Stomach (tissue), 19 donors: ENCODE measurements at regions of chr3 and their contacts with region 1.

Region 1: DNA sequence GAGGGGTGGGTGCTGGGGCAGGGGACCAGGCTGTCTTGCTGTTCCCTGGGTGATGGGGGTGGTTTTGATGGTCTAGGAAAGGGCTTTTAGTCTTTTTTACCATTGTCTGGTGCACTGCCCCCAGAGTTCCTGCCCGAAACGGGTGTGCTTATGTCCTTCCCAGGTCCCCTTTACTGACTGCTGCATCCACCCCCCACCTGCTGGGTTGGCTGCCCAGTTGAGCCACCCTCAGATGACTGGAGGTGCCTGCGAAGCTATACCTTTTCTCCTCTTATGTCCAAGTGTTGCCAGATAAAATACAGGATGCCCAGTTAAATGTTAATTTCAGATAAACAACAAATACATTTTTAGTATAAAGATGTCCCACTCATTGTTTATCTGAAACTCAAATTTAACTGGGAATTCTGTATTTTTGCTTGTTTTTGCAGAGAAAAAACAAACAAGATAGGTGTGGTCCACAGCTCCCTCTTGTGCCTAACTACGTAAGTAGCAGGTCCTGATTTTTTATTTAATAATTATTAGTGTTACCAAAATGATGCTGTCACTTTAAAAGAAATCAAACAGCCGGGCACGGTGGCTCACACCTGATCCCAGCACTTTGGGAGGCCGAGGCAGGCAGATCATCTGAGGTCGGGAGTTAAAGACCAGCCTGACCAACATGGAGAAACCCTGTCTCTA is 6.1 kb upstream of the RPP14 start:
- DNase-seq: peak in 1 of 2 donors; percentile 75
- H3K4me3 ChIP-seq: no peak overlapping the region
- H3K27ac ChIP-seq: no peak overlapping the region
- H3K4me1 ChIP-seq: peaks cover 0 to 8% (median 4%) of the 10 kb centered on the region in 4 donors
- H3K27me3 ChIP-seq: peaks cover 0 to 23% (median 0%) of the 10 kb centered on the region in 3 donors
- CTCF ChIP-seq: peak in 5 of 7 experiments; percentile 39 to 64 (median 55)
- EP300 ChIP-seq: no peak
- POLR2A ChIP-seq: no peak

Region 2: DNA sequence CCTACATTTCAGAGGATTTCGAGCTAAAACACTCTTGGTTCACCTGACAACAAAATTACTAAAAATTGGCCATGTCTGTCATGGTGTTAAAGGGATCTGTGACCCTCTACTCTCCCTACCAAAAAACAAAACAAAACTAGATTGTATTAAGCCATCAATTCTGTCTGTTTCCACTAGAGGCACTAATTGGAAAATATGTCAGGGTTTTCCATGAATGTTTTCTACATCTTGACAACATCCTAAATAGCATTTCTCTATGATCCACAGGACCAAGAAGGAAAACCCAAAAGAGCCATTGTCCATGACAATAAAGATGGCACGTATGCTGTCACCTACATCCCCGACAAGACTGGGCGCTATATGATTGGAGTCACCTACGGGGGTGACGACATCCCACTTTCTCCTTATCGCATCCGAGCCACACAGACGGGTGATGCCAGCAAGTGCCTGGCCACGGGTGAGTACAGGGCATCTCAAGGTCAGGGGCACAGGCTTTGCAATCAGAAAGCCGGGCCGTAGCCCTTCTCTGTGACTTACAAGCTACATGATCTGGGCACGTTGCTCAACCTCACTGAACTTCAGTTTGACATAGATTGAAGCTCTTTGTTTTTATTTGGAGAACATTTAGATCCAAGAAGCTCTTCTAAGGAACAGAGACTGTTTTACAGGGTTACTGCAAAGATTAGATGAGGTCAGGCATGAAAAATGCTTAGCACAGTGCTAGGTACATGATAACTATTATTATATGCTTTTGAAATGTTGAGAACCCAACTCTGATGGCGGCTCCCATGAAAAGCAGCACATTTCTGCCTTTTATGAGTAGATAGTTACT is 164.1 kb before region 1 on chr3:
- intact Hi-C with region 1: no loop called
- DNase-seq: no peak
- H3K4me3 ChIP-seq: no peak overlapping the region
- H3K27ac ChIP-seq: peak overlapping the region in 2 of 5 donors; percentile 21 to 24
- H3K4me1 ChIP-seq: peaks cover 0 to 5% (median 0%) of the 10 kb centered on the region in 4 donors
- H3K27me3 ChIP-seq: no peaks in the 10 kb centered on the region
- CTCF ChIP-seq: peak in 1 of 7 experiments; percentile 10
- EP300 ChIP-seq: no peak
- POLR2A ChIP-seq: no peak

Region 3: GRCh38 chr3:58177747-58178527 is 122.0 kb before region 1 on chr3:
- intact Hi-C with region 1: loop called (anchors 5 kb)
- DNase-seq: peak; percentile 93 to 96
- H3K4me3 ChIP-seq: peak overlapping the region; percentile 40 to 51 (median 44)
- H3K27ac ChIP-seq: peak overlapping the region; percentile 20 to 88 (median 78)
- H3K4me1 ChIP-seq: peaks cover 52 to 74% (median 58%) of the 10 kb centered on the region in 4 donors
- H3K27me3 ChIP-seq: no peaks in the 10 kb centered on the region
- CTCF ChIP-seq: peak in 5 of 7 experiments; percentile 88 to 96 (median 91)
- EP300 ChIP-seq: no peak
- POLR2A ChIP-seq: no peak

Region 4: DNA sequence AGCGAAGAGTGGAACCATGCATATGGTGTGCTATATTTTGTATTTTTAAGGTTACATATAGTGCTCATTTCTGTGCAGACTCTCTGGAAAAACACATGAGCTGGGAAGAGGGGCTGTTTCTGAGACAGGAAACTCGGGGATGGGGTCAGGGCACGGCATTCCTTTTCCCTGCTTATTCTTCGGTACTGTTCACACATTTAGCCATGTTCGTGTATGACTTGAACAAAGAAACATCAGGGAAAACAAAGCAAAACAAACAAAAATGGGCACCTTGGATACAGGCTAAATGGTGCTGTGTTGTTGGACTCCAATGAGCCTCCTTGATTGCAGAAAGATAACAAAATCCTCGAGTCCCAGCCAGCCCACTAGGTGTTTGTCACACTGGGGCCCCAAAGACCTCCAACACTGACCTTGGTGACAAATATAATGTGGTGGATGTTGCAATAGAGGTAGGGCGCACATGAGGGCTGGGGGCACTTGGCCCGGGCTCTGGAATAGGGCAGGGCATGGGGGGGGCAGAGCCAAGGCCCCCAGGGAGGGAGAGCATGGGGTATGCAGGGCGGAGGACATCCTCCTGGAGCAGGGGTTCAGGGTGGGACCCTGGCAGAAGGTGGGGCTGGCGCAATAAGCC is 108.5 kb before region 1 on chr3:
- intact Hi-C with region 1: loop called (anchors 5 kb)
- DNase-seq: no peak
- H3K4me3 ChIP-seq: no peak overlapping the region
- H3K27ac ChIP-seq: no peak overlapping the region
- H3K4me1 ChIP-seq: peaks cover 0 to 7% (median 3%) of the 10 kb centered on the region in 4 donors
- H3K27me3 ChIP-seq: no peaks in the 10 kb centered on the region
- CTCF ChIP-seq: no peak
- EP300 ChIP-seq: no peak
- POLR2A ChIP-seq: no peak

Region 5: GRCh38 chr3:58237238-58237940 is 62.6 kb before region 1 on chr3 and contains the start of gene ABHD6:
- intact Hi-C with region 1: loop called (anchors 10 kb)
- DNase-seq: peak; percentile 79 to 91
- H3K4me3 ChIP-seq: peak within 1 kb of the TSS; percentile 78 to 86 (median 85)
- H3K27ac ChIP-seq: peak within 1 kb of the TSS; percentile 85 to 94 (median 90)
- H3K4me1 ChIP-seq: peaks cover 4 to 37% (median 27%) of the 10 kb centered on the region in 4 donors
- H3K27me3 ChIP-seq: no peaks in the 10 kb centered on the region
- CTCF ChIP-seq: peak in 1 of 7 experiments; percentile 39
- EP300 ChIP-seq: no peak
- POLR2A ChIP-seq: no peak
- total RNA-seq, gene ABHD6: 5.8 to 22.8 (median 12.2) TPM